Activated CD4-positive, alpha-beta memory T cell treated with anti-CD3 and anti-CD28 coated beads for 36 hours (primary cell): ENCODE measurements at regions of chr12 and their contacts with region 1.

Region 1: GRCh38 chr12:12562585-12563261 is at the start of gene DUSP16:
- DNase-seq: peak; percentile 85
- H3K4me3 Mint-ChIP-seq: peak within 1 kb of the TSS; percentile 79
- H3K27ac Mint-ChIP-seq: peak within 1 kb of the TSS; percentile 92
- H3K4me1 Mint-ChIP-seq: peaks cover 37% of the 10 kb centered on the region
- H3K27me3 Mint-ChIP-seq: no peaks in the 10 kb centered on the region
- total RNA-seq, gene DUSP16: 70.2 to 82.1 TPM

Region 2: GRCh38 chr12:11981121-11981733 is 581.5 kb before region 1 on chr12:
- CTCF ChIA-PET with region 1: no interaction called
- POLR2A ChIA-PET with region 1: no interaction called
- intact Hi-C with region 1: no loop called
- DNase-seq: peak; percentile 78
- H3K4me3 Mint-ChIP-seq: peak overlapping the region; percentile 36
- H3K27ac Mint-ChIP-seq: peak overlapping the region; percentile 99
- H3K4me1 Mint-ChIP-seq: peaks cover 68% of the 10 kb centered on the region
- H3K27me3 Mint-ChIP-seq: no peaks in the 10 kb centered on the region

Region 3: GRCh38 chr12:12376646-12377448 is 185.9 kb before region 1 on chr12:
- CTCF ChIA-PET with region 1: interaction called, 24 read pairs
- POLR2A ChIA-PET with region 1: interaction called, 5 read pairs
- intact Hi-C with region 1: loop called (anchors 1 kb)
- DNase-seq: no peak
- H3K4me3 Mint-ChIP-seq: no peak overlapping the region
- H3K27ac Mint-ChIP-seq: peak overlapping the region; percentile 70
- H3K4me1 Mint-ChIP-seq: peaks cover 45% of the 10 kb centered on the region
- H3K27me3 Mint-ChIP-seq: no peaks in the 10 kb centered on the region

Region 4: GRCh38 chr12:12505544-12506495 is 56.9 kb before region 1 on chr12:
- CTCF ChIA-PET with region 1: interaction called, 5 read pairs
- POLR2A ChIA-PET with region 1: interaction called, 33 read pairs
- intact Hi-C with region 1: loop called (anchors 1 kb)
- DNase-seq: peak; percentile 63
- H3K4me3 Mint-ChIP-seq: peak overlapping the region; percentile 63
- H3K27ac Mint-ChIP-seq: peak overlapping the region; percentile 95
- H3K4me1 Mint-ChIP-seq: peaks cover 57% of the 10 kb centered on the region
- H3K27me3 Mint-ChIP-seq: no peaks in the 10 kb centered on the region

Region 5: GRCh38 chr12:12582895-12583303 is 20.2 kb after region 1 on chr12:
- CTCF ChIA-PET with region 1: interaction called, 11 read pairs
- POLR2A ChIA-PET with region 1: interaction called, 3 read pairs
- intact Hi-C with region 1: loop called (anchors 1 kb)
- DNase-seq: peak; percentile 81
- H3K4me3 Mint-ChIP-seq: peak overlapping the region; percentile 40
- H3K27ac Mint-ChIP-seq: peak overlapping the region; percentile 84
- H3K4me1 Mint-ChIP-seq: peaks cover 50% of the 10 kb centered on the region
- H3K27me3 Mint-ChIP-seq: peaks cover 3% of the 10 kb centered on the region

Region 6: DNA sequence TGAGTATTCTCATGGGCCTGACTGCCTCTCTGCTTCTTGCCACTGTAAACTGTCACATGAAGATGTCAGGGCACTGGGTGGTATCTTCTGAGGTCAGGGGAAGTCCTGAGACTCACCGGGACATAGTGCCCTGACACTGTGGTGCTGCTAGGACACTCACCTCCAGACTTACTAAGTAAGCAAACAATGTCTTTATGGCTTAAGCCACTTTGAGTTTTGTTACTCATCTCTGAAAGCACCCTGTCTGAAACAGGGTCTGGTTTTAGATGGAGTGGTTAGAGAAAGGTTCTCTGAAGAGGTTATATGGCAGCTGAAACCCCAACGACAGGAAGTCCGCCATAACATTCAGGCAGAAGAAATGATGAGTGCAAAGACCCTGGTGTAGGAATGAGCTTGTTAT is 110.6 kb after region 1 on chr12:
- CTCF ChIA-PET with region 1: no interaction called
- POLR2A ChIA-PET with region 1: no interaction called
- intact Hi-C with region 1: no loop called
- DNase-seq: peak; percentile 61
- H3K4me3 Mint-ChIP-seq: no peak overlapping the region
- H3K27ac Mint-ChIP-seq: peak overlapping the region; percentile 43
- H3K4me1 Mint-ChIP-seq: peaks cover 26% of the 10 kb centered on the region
- H3K27me3 Mint-ChIP-seq: no peaks in the 10 kb centered on the region

Region 7: DNA sequence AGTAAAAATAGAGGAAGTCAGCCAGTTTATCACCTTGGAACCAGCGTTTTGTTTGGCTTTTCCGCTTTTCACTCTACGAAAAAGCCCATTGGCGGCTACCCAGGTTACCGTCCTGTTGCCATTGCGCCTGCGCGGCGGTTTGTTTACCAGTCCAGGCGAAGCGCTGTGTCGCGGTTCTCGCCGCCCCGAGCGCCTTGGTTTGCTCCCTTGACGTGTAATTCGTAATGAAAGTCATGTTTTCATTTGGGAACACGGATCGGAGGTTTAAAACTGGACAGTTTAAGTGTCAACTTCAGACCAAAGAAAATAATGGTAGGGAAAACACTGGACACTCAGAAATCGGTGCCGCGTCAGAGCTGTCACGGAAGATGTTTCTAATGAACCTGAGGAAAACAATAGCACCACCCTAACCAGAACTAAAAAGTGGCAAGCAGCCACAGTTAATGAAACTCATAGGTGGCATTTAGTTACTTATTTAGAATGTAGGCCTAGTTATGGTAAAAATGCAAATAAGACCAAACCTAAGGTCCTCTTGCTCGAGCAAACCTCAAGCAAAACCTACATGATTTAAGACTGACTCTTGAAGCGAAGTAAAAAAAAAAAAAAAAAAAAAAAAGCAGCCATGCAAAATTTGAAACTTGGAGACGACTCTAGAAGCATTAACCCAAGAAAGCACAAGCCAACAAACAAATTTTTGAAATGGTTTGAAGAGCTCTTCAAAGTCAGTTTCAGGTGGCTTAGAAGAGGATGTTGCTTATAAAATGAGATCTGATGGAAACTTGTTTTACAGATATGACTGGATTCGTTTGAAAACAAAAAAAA is 134.1 kb after region 1 on chr12:
- CTCF ChIA-PET with region 1: no interaction called
- POLR2A ChIA-PET with region 1: interaction called, 6 read pairs
- intact Hi-C with region 1: loop called (anchors 2 kb)
- DNase-seq: peak; percentile 92
- H3K4me3 Mint-ChIP-seq: peak overlapping the region; percentile 92
- H3K27ac Mint-ChIP-seq: peak overlapping the region; percentile 98
- H3K4me1 Mint-ChIP-seq: peaks cover 65% of the 10 kb centered on the region
- H3K27me3 Mint-ChIP-seq: no peaks in the 10 kb centered on the region

Region 8: DNA sequence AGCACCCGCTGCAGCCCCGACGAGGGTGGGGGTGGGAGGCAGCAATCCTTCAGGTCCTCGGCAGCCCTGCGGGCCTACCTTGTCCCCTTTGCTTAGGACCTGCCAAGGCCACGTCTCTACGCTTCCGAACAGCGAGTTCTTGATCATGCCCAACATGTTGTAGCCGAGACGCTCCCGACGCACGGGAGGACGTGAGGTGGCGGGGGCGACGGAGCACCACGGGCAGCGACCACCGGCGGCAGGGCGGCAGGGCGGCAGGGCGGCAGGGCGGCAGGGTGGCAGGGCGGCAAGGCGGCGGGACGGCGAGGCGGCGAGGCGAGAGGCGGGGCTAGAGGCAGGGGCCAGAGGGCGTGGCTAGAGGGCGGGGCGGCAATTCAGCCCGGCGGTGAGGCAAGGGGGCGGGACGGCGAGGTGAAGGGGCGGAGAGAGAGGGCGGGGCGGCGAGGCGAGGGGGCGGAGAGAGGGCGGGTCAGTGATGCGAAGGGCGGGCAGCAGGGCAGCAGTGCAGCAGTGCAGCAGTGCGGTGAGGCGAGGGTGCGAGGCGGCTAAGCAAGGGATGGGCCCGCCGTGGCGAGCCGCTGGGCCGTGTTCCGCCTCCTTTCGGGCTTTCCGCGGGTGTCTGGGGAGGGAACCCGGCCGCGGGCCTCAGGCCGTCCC is 437.4 kb after region 1 on chr12 and contains the start of gene HEBP1:
- CTCF ChIA-PET with region 1: no interaction called
- POLR2A ChIA-PET with region 1: no interaction called
- intact Hi-C with region 1: loop called (anchors 5 kb)
- DNase-seq: peak; percentile 97
- H3K4me3 Mint-ChIP-seq: peak within 1 kb of the TSS; percentile 82
- H3K27ac Mint-ChIP-seq: peak within 1 kb of the TSS; percentile 53
- H3K4me1 Mint-ChIP-seq: peaks cover 25% of the 10 kb centered on the region
- H3K27me3 Mint-ChIP-seq: peaks cover 6% of the 10 kb centered on the region
- total RNA-seq, gene HEBP1: 20.5 to 22.4 TPM